Heart left ventricle (tissue), 16 donors: ENCODE measurements at regions of chr13 and their contacts with region 1.

Region 1: DNA sequence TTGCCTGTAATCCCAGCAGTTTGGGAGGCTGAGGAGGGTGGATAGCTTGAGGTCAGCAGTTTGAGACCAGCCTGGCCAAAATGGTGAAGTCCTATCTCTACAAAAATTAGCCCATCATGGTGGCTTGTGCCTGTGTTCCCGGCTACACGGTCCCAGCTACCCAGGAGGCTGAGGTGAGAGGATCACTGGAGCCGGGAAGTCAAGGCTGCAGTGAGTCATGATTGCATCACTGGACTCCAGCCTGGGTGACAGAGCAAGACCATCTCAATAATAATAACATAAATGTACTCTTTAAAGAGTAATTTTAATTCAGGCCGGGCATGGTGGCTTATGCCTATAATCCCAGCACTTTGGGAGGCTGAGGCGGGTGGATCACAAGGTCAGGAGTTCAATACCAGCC is 38.7 kb downstream of the SKA3 start:
- DNase-seq: no peak
- ATAC-seq: no peak
- H3K4me3 ChIP-seq: no peak overlapping the region
- H3K27ac ChIP-seq: no peak overlapping the region
- H3K4me1 ChIP-seq: peaks cover 6 to 22% (median 21%) of the 10 kb centered on the region in 12 donors
- H3K27me3 ChIP-seq: no peaks in the 10 kb centered on the region
- CTCF ChIP-seq: no peak
- POLR2A ChIP-seq: no peak

Region 2: DNA sequence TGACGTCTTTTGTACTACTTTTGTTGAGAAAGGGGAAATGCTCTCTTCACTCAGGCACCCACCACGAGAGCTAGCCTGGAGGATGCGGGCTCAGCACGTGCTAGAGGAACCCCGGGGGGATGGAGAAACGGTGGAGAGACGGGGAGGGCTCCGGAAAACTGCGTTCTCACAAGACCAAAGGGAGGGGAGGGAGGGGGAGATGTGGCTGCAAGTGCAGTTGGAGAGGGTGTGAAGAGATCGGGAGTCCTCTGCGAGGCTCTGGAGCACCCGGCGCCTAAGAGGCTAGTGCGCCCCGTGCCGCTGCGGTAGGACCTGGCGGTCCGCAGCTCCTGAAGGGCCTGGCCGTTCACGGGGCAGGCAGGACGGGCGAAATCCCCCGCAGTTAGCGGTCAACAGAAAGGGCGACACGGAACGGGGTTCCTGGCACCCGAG is 191.7 kb before region 1 on chr13:
- intact Hi-C with region 1: loop called in 9 of 10 experiments (anchors 2 to 10 kb)
- DNase-seq: peak in 3 of 5 donors; percentile 20 to 42 (median 23)
- ATAC-seq: peak in 3 of 4 donors; percentile 37 to 46 (median 38)
- H3K4me3 ChIP-seq: peak overlapping the region in 9 of 12 donors; percentile 10 to 40 (median 28)
- H3K27ac ChIP-seq: no peak overlapping the region
- H3K4me1 ChIP-seq: peaks cover 0 to 15% (median 2%) of the 10 kb centered on the region in 12 donors
- H3K27me3 ChIP-seq: peaks cover 0 to 14% (median 4%) of the 10 kb centered on the region in 9 donors
- CTCF ChIP-seq: no peak
- POLR2A ChIP-seq: no peak

Region 3: GRCh38 chr13:21034603-21035191 is 103.0 kb before region 1 on chr13:
- intact Hi-C with region 1: loop called in 1 of 10 experiments (anchors 10 kb)
- DNase-seq: peak in 3 of 5 donors; percentile 51 to 57 (median 52)
- ATAC-seq: peak; percentile 53 to 79 (median 66)
- H3K4me3 ChIP-seq: no peak overlapping the region
- H3K27ac ChIP-seq: peak overlapping the region; percentile 2 to 87 (median 76)
- H3K4me1 ChIP-seq: peaks cover 17 to 87% (median 72%) of the 10 kb centered on the region in 12 donors
- H3K27me3 ChIP-seq: no peaks in the 10 kb centered on the region
- CTCF ChIP-seq: peak in 11 of 12 donors; percentile 9 to 65 (median 45)
- POLR2A ChIP-seq: no peak

Region 4: DNA sequence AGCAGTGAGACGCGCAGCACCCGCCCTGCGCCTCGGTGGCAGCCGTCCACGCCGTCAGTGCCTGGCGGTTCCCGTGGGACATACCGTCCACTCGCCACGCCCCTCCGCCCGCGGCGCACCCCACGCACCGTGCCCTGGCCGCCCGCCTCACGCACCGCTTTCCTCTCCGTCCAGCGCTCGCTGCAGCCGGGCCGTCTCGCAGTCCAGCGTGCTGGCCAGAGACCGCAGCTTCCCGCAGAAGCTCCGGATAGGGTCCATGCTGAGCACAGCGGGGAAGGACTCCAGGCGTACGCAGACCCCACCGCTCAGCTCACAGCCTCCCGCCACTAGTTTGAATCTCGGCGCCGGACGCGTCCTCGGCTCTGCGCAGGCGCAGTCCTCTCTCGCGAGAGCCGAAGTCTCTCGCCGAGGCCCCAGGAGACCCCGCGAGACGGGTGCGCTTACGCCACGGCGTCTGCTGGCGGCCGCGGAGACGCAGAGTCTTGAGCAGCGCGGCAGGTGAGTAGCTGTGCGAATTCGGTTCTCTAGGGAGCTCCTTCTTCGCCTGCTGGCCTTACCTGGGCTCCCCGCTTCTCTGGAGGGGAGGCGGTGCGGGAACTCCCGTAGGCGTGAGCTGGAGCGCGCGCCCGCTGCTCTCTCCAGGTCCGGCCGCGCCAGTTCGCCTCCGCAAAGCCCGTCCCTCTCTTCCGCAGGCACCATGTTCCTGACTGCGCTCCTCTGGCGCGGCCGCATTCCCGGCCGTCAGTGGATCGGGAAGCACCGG is 38.7 kb after region 1 on chr13 and contains the starts of genes MRPL57 and SKA3:
- intact Hi-C with region 1: loop called in 1 of 10 experiments (anchors 2 kb)
- DNase-seq: peak; percentile 90 to 96 (median 93)
- ATAC-seq: peak; percentile 98
- H3K4me3 ChIP-seq: peak within 1 kb of the TSS; percentile 74 to 99 (median 85)
- H3K27ac ChIP-seq: peak within 1 kb of the TSS; percentile 94 to 99 (median 96)
- H3K4me1 ChIP-seq: peaks cover 0 to 21% (median 14%) of the 10 kb centered on the region in 12 donors
- H3K27me3 ChIP-seq: no peaks in the 10 kb centered on the region
- CTCF ChIP-seq: peak in 4 of 12 donors; percentile 11 to 35 (median 16)
- POLR2A ChIP-seq: peak in 1 of 2 donors; percentile 95
- total RNA-seq, gene MRPL57: 19.0 to 51.6 (median 22.5) TPM
- total RNA-seq, gene SKA3: 0.33 to 4.5 (median 0.59) TPM in 6 of 9 donors, not detected in the others